IMR-90 (cell line): ENCODE measurements at regions of chr5 and their contacts with region 1.

Region 1: DNA sequence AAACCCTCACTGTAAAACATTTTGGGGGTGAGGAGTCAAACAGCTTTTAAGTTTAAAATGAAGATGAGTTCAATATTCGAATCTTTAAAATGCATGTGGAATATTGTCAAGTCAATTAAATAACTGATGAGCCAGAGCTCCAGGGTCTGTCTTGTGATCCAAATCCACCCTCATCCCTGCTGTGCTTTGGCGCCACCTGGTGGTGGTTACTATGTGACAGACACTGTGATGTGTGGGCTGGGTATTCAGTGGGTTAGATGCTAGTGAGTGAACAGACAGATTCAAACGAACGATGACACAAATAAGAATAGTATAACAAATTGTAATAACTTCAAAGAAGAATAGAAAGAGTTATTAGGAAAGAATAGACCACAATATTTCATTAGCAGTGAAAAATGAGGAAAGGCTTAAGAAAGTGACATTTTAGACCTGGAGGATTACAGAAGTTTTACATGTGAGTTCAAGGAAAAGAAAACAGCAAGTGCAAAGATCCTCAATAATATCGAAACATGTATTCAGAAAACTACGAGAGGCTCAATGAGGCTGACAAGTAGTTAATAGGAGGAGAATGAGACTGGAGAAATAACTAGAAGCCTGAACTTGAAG is 51.4 kb upstream of the CHSY3 start:
- DNase-seq: peak; percentile 55
- ATAC-seq: peak; percentile 91
- H3K4me3 ChIP-seq: no peak overlapping the region
- H3K27ac ChIP-seq: no peak overlapping the region
- H3K4me1 ChIP-seq: no peaks in the 10 kb centered on the region
- H3K27me3 ChIP-seq: no peaks in the 10 kb centered on the region
- CTCF ChIP-seq: peak; percentile 78
- POLR2A ChIP-seq: no peak
- RAD21 ChIP-seq: peak; percentile 58

Region 2: DNA sequence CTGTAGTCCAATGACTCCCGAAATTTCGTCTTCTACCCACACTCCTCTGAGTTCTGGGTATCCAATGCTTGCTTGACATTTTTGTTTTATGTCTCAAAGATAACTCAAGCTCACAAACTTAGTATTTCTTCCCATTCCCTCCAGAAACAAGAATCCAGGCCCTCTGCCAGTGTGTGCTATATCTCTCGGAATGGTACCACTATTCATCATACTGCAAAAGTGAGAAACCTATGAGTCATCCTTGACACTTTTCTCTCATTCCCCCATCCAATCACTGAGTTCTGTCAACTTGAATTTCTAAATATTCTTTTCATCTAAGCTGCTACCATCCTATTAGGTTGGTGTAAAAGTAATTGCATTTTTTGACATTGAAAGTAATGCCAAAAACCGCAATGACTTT is 1759.5 kb before region 1 on chr5:
- CTCF ChIA-PET with region 1: no interaction called
- POLR2A ChIA-PET with region 1: no interaction called
- dilution Hi-C with region 1: no loop called
- in situ Hi-C with region 1: no loop called
- intact Hi-C with region 1: no loop called
- DNase-seq: no peak
- ATAC-seq: no peak
- H3K4me3 ChIP-seq: no peak overlapping the region
- H3K27ac ChIP-seq: no peak overlapping the region
- H3K4me1 ChIP-seq: no peaks in the 10 kb centered on the region; the same call in 1 of the 2 replicates
- H3K27me3 ChIP-seq: no peaks in the 10 kb centered on the region
- CTCF ChIP-seq: no peak
- POLR2A ChIP-seq: no peak
- RAD21 ChIP-seq: no peak

Region 3: DNA sequence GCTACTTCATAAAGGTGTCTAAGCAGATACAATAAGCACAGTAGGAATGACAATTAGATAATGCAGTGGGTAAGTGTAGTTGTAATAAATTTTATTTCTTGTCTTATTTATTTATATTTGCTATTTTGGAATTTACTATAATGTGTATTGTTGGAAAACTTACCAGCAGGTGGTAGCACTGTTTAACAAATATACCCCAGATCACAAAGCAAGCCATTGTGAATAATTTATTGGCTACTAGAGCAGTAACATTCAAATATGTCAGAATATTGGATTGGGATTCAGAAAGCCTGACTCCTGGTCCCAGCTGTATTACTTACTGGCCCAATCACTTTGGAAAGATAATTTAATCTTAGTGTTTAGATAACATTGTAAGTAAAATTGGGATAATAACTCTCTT is 680.3 kb before region 1 on chr5:
- CTCF ChIA-PET with region 1: no interaction called
- POLR2A ChIA-PET with region 1: no interaction called
- dilution Hi-C with region 1: no loop called
- in situ Hi-C with region 1: no loop called
- intact Hi-C with region 1: loop called (anchors 5 kb)
- DNase-seq: no peak
- ATAC-seq: no peak
- H3K4me3 ChIP-seq: no peak overlapping the region
- H3K27ac ChIP-seq: no peak overlapping the region
- H3K4me1 ChIP-seq: no peaks in the 10 kb centered on the region
- H3K27me3 ChIP-seq: no peaks in the 10 kb centered on the region
- CTCF ChIP-seq: 0 out of 2 replicates have a peak, but pooled peaks have one; percentile 21
- POLR2A ChIP-seq: no peak
- RAD21 ChIP-seq: no peak